Activated CD4-positive, alpha-beta T cell treated with anti-CD3 and anti-CD28 coated beads, Interleukin-2, amount 10 ng/mL, durations not matched to agents 24 days and 14 days (primary cell): ENCODE measurements at regions of chr6 and their contacts with region 1.

Region 1: DNA sequence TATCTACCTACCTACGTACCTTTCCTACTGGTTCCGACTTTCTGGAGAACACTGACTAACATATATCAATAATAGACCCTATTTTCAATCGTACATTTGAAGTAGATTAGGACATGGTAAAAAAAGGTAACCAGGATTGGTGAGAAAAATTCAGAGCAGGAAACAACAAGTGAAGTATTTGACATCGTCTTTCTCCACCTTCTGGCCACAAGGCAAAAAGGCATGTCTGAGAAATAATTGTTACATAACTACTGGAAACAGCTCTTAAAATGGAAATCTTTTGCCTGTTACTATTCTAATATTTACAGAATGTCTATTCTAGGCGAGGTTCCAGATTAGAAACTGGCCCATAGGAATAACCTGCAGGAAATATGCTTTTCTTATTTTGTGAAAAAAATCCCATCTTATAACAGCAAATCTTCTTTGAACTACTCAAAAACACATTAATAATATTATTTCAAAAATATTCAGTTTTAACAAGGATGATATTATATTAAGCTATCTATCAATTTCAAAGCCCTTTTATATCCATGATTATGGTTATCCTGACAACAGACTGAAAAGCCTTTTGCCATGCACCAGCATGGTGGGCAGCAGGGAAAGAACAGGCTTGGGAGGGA is 80.8 kb downstream of the RCAN2 start:
- DNase-seq: peak; percentile 68
- H3K4me3 Mint-ChIP-seq: no peak overlapping the region
- H3K27ac Mint-ChIP-seq: no peak overlapping the region
- H3K4me1 Mint-ChIP-seq: no peaks in the 10 kb centered on the region
- H3K27me3 Mint-ChIP-seq: peaks cover 5% of the 10 kb centered on the region

Region 2: GRCh38 chr6:45930420-45931040 is 479.9 kb before region 1 on chr6:
- intact Hi-C with region 1: loop called (anchors 2 kb)
- DNase-seq: peak; percentile 86
- H3K4me3 Mint-ChIP-seq: no peak overlapping the region
- H3K27ac Mint-ChIP-seq: no peak overlapping the region
- H3K4me1 Mint-ChIP-seq: peaks cover 7% of the 10 kb centered on the region
- H3K27me3 Mint-ChIP-seq: no peaks in the 10 kb centered on the region

Region 3: DNA sequence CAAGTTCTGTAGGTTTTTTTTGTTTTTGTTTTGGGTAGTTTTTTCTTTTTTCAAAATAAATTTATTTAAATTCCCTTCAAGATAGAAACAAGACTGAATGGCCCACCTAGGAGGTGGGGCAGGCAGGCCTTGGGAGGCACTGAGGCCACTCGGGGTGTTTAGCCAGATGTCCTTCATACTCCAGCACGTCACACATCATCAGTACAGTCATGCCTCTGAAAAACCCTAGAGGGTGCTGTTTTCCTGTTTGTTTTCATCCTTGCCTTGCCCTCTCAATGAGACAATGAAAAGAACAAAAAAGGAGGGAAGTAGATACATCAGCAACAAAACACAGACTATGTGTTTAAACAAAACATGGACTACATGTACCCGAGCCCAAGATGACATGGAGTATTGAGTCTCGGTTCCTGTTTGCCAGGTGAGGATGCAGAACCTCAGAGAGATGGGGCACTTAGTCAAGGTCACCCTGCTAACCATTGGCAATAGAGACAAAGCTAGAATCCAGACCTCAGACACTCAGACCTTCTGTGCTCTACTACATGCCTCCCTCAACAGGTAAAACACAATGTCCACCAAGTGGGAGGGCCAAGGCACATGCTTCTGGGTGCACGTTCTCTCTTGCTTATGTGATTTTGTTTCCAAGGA is 368.0 kb before region 1 on chr6:
- intact Hi-C with region 1: loop called (anchors 1 kb)
- DNase-seq: peak; percentile 73
- H3K4me3 Mint-ChIP-seq: no peak overlapping the region
- H3K27ac Mint-ChIP-seq: no peak overlapping the region
- H3K4me1 Mint-ChIP-seq: peaks cover 3% of the 10 kb centered on the region
- H3K27me3 Mint-ChIP-seq: no peaks in the 10 kb centered on the region

Region 4: GRCh38 chr6:46221222-46221793 is 189.1 kb before region 1 on chr6:
- intact Hi-C with region 1: loop called (anchors 1 kb)
- DNase-seq: peak; percentile 66
- H3K4me3 Mint-ChIP-seq: no peak overlapping the region
- H3K27ac Mint-ChIP-seq: no peak overlapping the region
- H3K4me1 Mint-ChIP-seq: no peaks in the 10 kb centered on the region
- H3K27me3 Mint-ChIP-seq: peaks cover 4% of the 10 kb centered on the region

Region 5: DNA sequence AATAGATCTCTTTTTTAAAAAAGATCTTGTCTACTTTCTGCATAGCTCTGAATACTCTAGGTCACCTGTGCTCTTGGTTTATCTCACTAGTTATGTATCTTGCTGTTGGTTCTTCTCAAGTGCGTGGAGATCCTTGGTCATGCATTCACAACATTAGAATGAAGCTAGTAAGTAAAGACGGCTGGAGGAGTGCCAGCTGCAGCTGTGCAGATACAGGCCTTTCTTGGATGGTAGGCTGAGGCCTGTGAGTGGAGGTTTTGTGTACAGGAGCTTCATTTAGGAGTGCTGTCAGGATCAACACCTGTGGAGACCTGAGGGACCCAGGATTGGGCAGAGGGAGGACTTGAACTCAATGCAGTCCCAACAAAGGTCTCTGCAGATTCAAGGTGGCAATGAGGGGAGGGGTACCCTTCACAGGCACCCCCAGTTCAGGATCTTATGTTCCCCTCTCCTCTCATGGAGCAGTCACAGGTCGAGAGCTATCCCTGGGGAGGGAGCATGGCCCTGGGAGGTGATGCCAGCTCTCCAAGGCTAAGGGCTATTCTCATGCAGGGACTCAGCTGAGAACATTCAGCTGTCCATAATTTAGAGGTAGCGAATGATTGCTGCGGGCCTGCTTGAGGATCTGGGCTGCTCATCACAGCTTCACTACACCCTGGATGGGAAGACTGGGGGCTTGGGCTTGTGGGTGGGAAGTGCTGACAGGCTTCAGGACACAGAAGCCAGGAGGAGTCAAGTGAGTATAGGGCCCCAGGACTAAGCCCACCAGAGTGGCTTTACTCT is 140.8 kb before region 1 on chr6:
- intact Hi-C with region 1: no loop called
- DNase-seq: no peak
- H3K4me3 Mint-ChIP-seq: no peak overlapping the region
- H3K27ac Mint-ChIP-seq: no peak overlapping the region
- H3K4me1 Mint-ChIP-seq: no peaks in the 10 kb centered on the region
- H3K27me3 Mint-ChIP-seq: peaks cover 12% of the 10 kb centered on the region

Region 6: DNA sequence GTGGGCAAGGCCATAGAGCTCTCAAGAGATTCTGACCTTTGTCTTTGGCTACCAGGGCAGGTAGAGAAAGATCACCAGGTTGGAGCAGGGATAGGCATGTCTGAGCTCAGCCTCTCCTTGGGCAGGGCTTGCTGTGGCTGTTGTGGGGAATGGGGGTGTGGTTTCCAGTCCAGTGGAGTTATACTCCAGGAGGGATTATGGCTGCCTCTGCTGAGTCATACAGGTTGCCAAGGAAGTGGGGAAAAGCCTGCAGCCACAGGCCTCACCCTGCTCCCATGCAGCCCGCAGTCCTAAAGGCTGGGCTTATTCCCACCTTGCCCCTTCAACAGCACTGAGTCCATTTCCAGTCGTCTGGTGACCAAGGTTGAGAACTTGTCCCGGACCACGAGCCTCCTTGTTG is 404.7 kb after region 1 on chr6:
- intact Hi-C with region 1: no loop called
- DNase-seq: no peak
- H3K4me3 Mint-ChIP-seq: no peak overlapping the region
- H3K27ac Mint-ChIP-seq: no peak overlapping the region
- H3K4me1 Mint-ChIP-seq: no peaks in the 10 kb centered on the region
- H3K27me3 Mint-ChIP-seq: peaks cover 3% of the 10 kb centered on the region